ENCODE measurements at regions of chr3 and their contacts with region 1.

Region 1: GRCh38 chr3:50088725-50089608 is at the start of gene RBM5:
- DNase-seq: peak; percentile 98
- H3K4me3 Mint-ChIP-seq: peak within 1 kb of the TSS; percentile 98
- H3K27ac Mint-ChIP-seq: peak within 1 kb of the TSS; percentile 97
- H3K4me1 Mint-ChIP-seq: peaks cover 21% of the 10 kb centered on the region
- H3K27me3 Mint-ChIP-seq: no peaks in the 10 kb centered on the region
- total RNA-seq, gene RBM5: 154 and 161 TPM in 2 replicates

Region 2: DNA sequence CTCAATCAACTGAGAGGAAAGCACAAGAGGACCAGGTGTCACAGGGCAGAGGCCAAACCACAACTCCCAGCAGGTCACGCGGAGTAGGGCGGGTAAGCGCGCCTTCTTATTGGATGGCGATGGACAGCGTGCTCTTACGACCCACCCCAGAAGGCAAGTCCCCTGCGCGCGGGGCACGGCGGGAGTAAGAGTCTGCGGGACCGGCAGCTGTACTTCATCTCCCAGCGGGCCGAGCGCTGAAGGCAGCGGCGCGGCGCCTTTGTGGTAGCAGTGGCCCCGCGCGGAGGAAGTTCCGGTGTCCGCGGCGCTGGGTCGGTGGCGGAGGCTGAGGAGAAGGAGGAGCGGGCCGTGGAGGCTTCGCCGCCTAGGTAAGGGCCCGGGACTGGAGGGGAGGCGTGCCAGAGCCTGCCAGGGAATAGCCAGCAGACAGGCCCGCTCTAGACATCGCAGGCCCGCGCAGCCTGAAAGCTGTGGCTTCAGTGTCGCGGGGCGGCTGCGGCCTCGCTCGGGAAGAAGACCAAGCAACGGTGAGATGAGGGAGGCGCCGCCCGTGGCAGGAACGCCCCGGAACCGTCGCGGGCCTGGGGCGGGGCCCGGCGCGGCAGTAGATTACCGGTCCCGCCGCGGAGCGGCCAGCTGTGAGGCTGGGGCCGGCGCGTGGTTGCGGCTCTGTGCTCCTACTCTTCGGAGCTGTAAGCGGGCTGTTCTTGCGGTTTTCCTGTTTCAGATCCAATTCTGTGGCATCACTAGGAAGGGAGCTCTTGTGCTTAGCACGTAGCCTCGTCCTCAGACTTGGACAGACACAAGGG is 148.9 kb before region 1 on chr3 and contains the start of gene RBM6:
- intact Hi-C with region 1: loop called (anchors 1 kb)
- DNase-seq: peak; percentile 98
- H3K4me3 Mint-ChIP-seq: peak within 1 kb of the TSS; percentile 99
- H3K27ac Mint-ChIP-seq: peak within 1 kb of the TSS; percentile 98
- H3K4me1 Mint-ChIP-seq: peaks cover 24% of the 10 kb centered on the region
- H3K27me3 Mint-ChIP-seq: no peaks in the 10 kb centered on the region
- total RNA-seq, gene RBM6: 95.3 and 100 TPM in 2 replicates